Gastrocnemius medialis (tissue), 4 donors: ENCODE measurements at regions of chr5 and their contacts with region 1.

Region 1: GRCh38 chr5:133247881-133248624 is 196.2 kb downstream of the HSPA4 start:
- DNase-seq: peak; percentile 82 to 93
- ATAC-seq: peak; percentile 95 to 97
- H3K4me3 ChIP-seq: no peak overlapping the region
- H3K27ac ChIP-seq: peak overlapping the region; percentile 56 to 76 (median 66)
- H3K4me1 ChIP-seq: peaks cover 16 to 23% of the 10 kb centered on the region in 2 donors
- H3K27me3 ChIP-seq: no peaks in the 10 kb centered on the region
- CTCF ChIP-seq: peak; percentile 37 to 58 (median 51)
- POLR2A ChIP-seq: no peak

Region 2: GRCh38 chr5:133111299-133111698 is 136.8 kb before region 1 on chr5:
- in situ Hi-C with region 1: no loop called
- intact Hi-C with region 1: loop called (anchors 2 kb)
- DNase-seq: peak; percentile 63 to 80
- ATAC-seq: peak; percentile 73 to 83
- H3K4me3 ChIP-seq: no peak overlapping the region
- H3K27ac ChIP-seq: no peak overlapping the region
- H3K4me1 ChIP-seq: peaks cover 21 to 26% of the 10 kb centered on the region in 2 donors
- H3K27me3 ChIP-seq: no peaks in the 10 kb centered on the region
- CTCF ChIP-seq: peak; percentile 89 to 94 (median 92)
- POLR2A ChIP-seq: no peak

Region 3: DNA sequence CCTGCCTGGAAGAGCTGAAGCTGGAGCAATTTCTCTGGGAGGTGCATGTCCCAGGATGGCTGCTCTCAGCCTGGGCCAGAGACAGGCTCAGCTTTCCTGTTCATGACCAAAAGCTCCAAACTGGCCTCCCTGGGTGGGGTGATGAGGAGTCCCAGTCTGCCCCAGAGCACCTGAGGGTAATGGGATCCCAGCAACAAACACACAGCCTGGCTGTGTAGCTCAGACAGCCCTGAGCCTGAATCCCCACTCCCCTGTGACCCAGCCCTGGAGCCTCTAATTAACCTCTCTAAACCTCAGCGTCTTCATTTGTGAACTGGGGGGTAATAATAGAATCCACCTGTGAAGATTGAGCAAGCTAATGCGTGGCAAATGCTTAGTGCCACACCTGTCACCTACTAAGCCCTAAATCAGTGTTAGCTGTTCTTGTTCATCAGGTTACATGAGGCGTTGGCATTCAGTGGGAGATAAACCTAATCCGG is 128.8 kb before region 1 on chr5:
- in situ Hi-C with region 1: no loop called
- intact Hi-C with region 1: loop called (anchors 2 kb)
- DNase-seq: peak; percentile 81 to 94
- ATAC-seq: peak; percentile 84 to 85
- H3K4me3 ChIP-seq: no peak overlapping the region
- H3K27ac ChIP-seq: peak overlapping the region; percentile 92 to 95 (median 94)
- H3K4me1 ChIP-seq: peaks cover 61 to 72% of the 10 kb centered on the region in 2 donors
- H3K27me3 ChIP-seq: no peaks in the 10 kb centered on the region
- CTCF ChIP-seq: no peak
- POLR2A ChIP-seq: peak in 1 of 2 donors; percentile 19

Region 4: GRCh38 chr5:133225671-133226152 is 22.3 kb before region 1 on chr5:
- in situ Hi-C with region 1: no loop called
- intact Hi-C with region 1: loop called (anchors 2 kb)
- DNase-seq: peak; percentile 66 to 87
- ATAC-seq: peak; percentile 96
- H3K4me3 ChIP-seq: no peak overlapping the region
- H3K27ac ChIP-seq: peak overlapping the region; percentile 69 to 84 (median 75)
- H3K4me1 ChIP-seq: peaks cover 8 to 13% of the 10 kb centered on the region in 2 donors
- H3K27me3 ChIP-seq: no peaks in the 10 kb centered on the region
- CTCF ChIP-seq: no peak
- POLR2A ChIP-seq: no peak